Naive thymus-derived CD4-positive, alpha-beta T cell (primary cell): ENCODE measurements at regions of chr1 and their contacts with region 1.

Region 1: DNA sequence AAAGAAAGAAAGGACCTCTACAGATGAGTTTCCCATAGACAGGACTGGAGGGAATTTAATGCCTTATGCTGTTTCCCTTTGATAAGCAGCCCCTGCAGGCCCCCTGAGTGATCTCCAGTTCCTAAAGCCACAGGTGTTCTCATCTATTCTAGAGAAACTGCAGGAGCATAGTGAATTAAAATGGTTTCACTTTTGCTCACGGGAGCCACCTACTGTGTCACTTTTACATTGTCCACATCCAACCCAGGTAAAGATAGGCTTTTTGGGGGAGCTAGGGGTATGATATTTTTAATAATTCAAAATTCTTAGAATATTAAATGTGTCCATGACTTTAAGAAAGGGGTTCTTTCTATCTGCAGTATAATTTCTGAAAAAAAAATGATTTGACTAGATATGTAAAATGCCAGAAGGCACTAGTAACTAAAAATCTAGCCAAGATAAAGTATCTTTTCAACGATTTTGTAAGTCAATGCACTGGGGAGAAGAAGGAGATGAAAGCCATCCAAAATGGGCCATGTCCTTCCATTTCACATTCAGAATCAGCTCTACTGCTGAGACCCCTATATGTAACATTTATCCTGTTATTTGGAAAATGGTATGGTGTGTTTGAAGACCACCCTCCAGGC is 267.3 kb upstream of the DUSP10 start:
- DNase-seq: peak in 6 of 9 donors; percentile 1 to 36 (median 27)
- ATAC-seq: peak; percentile 67
- H3K4me3 ChIP-seq: no peak overlapping the region
- H3K4me3 Mint-ChIP-seq: peak overlapping the region in 5 of 10 donors; percentile 6 to 53 (median 31)
- H3K27ac ChIP-seq: no peak overlapping the region
- H3K27ac Mint-ChIP-seq: peak overlapping the region in 1 of 9 donors; percentile 31
- H3K4me1 ChIP-seq: no peaks in the 10 kb centered on the region
- H3K4me1 Mint-ChIP-seq: peaks cover 0 to 4% (median 0%) of the 10 kb centered on the region in 7 donors
- H3K27me3 ChIP-seq: no peaks in the 10 kb centered on the region
- H3K27me3 Mint-ChIP-seq: peaks cover 0 to 25% (median 0%) of the 10 kb centered on the region in 5 donors

Region 2: GRCh38 chr1:220810179-220810653 is 1199.0 kb before region 1 on chr1:
- CTCF ChIA-PET with region 1: no interaction called
- POLR2A ChIA-PET with region 1: no interaction called
- intact Hi-C with region 1: loop called in 1 of 2 experiments (anchors 2 kb)
- DNase-seq: peak; percentile 48 to 71 (median 59)
- ATAC-seq: peak; percentile 97
- H3K4me3 ChIP-seq: no peak overlapping the region
- H3K4me3 Mint-ChIP-seq: peak overlapping the region; percentile 33 to 86 (median 75)
- H3K27ac ChIP-seq: no peak overlapping the region
- H3K27ac Mint-ChIP-seq: peak overlapping the region in 1 of 9 donors; percentile 25
- H3K4me1 ChIP-seq: no peaks in the 10 kb centered on the region
- H3K4me1 Mint-ChIP-seq: peaks cover 0 to 9% (median 7%) of the 10 kb centered on the region in 7 donors
- H3K27me3 ChIP-seq: no peaks in the 10 kb centered on the region
- H3K27me3 Mint-ChIP-seq: peaks cover 5 to 33% (median 26%) of the 10 kb centered on the region in 5 donors

Region 3: DNA sequence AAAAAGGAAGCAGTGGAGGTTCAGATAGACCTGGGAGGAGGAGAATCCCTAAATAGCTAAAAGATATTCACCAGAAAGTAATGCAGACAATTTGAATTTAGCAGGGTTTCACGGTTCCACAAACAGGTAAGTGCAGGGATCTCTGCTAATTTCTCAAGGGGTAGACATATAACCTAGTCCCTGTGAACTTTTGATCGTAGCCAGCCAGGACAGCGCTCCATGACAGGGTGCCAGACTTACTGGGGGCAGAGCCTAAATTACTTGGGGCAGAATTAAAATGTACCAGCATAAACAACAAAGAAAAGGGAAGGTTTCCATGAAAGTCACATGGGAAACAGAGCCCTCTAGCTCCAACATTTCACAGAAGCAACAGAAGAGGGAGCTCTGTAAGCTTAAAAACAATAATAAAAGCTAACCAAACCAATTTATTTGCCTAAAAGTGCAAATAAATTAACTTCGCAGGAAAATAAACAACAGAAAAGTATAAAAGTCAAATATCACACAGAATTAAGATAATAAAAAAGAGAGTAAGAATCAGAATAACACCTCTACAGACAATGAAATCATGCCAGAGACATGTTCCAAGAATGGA is 465.6 kb before region 1 on chr1:
- CTCF ChIA-PET with region 1: no interaction called
- POLR2A ChIA-PET with region 1: no interaction called
- intact Hi-C with region 1: loop called (anchors 1 to 2 kb)
- DNase-seq: peak in 1 of 9 donors; percentile 4
- ATAC-seq: no peak
- H3K4me3 ChIP-seq: no peak overlapping the region
- H3K4me3 Mint-ChIP-seq: no peak overlapping the region
- H3K27ac ChIP-seq: no peak overlapping the region
- H3K27ac Mint-ChIP-seq: peak overlapping the region in 1 of 9 donors; percentile 21
- H3K4me1 ChIP-seq: no peaks in the 10 kb centered on the region
- H3K4me1 Mint-ChIP-seq: peaks cover 0 to 3% (median 0%) of the 10 kb centered on the region in 7 donors
- H3K27me3 ChIP-seq: no peaks in the 10 kb centered on the region
- H3K27me3 Mint-ChIP-seq: peaks cover 5 to 27% (median 13%) of the 10 kb centered on the region in 5 donors

Region 4: DNA sequence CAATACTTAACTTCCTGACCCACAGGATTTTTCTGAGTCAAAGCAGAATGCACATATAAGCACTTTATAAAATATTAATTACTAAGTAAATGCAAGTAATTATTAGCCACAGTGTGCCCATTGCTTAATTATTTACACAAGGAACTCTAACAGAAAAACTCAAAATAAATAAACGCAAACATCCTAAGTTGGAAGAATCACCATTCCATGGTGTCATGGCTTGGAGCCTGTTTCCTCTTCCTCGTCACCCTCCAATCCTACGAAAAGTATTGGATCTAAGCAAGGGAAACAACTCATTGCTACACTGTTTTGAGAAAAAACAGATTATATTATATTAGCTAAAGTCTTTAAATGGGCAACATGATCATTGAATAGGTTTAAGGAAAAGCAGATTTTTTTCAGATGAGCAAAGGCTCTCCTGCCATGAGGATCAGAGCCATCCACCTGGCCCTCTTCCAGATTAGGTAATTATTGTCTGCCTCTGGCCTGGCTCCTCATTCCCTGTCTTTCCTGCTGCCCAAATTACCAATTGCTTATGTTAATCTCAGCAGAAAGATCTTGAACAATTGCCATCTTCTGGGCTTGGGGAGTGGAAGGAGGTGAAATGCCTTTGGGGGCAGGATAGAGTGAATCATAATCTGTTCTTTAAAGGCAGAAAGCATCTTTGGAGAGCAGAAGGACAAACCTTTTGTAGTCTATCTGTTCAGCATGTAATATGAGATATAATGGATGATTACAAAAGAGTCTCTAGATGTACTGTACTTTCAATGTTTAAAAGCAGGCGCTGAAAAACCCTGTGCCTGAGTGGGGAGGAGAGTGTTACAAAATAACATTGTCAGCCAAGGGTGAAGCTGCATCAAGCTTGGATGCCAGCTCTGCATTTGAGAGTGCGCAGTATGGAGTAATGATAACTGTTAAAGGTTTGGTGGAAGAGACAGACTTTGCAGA is 388.5 kb before region 1 on chr1:
- CTCF ChIA-PET with region 1: no interaction called
- POLR2A ChIA-PET with region 1: no interaction called
- intact Hi-C with region 1: loop called in 1 of 2 experiments (anchors 10 kb)
- DNase-seq: no peak
- ATAC-seq: no peak
- H3K4me3 ChIP-seq: no peak overlapping the region
- H3K4me3 Mint-ChIP-seq: no peak overlapping the region
- H3K27ac ChIP-seq: no peak overlapping the region
- H3K27ac Mint-ChIP-seq: no peak overlapping the region
- H3K4me1 ChIP-seq: no peaks in the 10 kb centered on the region
- H3K4me1 Mint-ChIP-seq: no peaks in the 10 kb centered on the region
- H3K27me3 ChIP-seq: no peaks in the 10 kb centered on the region
- H3K27me3 Mint-ChIP-seq: peaks cover 0 to 27% (median 0%) of the 10 kb centered on the region in 5 donors

Region 5: DNA sequence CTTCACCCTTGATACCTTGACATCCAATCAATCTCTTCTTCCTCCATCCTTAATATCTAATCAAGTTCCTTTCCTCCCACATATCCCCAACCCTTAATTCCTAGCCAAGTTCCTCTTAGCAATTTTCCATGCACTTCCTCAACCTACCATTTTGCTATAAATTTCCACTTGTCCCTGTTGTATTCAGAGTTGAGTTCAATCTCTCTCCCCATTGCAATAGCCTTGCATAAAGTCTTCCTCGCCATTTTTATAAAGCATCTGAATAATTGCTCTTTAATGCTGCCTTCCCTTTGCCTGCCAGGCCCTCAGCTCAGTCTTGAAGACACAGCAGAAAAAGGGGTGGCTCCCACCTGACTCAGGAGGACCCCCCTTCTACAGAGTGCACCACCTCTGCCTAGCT is 148.4 kb after region 1 on chr1:
- CTCF ChIA-PET with region 1: no interaction called
- POLR2A ChIA-PET with region 1: no interaction called
- intact Hi-C with region 1: no loop called
- DNase-seq: no peak
- ATAC-seq: no peak
- H3K4me3 ChIP-seq: no peak overlapping the region
- H3K4me3 Mint-ChIP-seq: peak overlapping the region in 1 of 10 donors; percentile 37
- H3K27ac ChIP-seq: no peak overlapping the region
- H3K27ac Mint-ChIP-seq: no peak overlapping the region
- H3K4me1 ChIP-seq: no peaks in the 10 kb centered on the region
- H3K4me1 Mint-ChIP-seq: no peaks in the 10 kb centered on the region
- H3K27me3 ChIP-seq: no peaks in the 10 kb centered on the region
- H3K27me3 Mint-ChIP-seq: no peaks in the 10 kb centered on the region

Region 6: DNA sequence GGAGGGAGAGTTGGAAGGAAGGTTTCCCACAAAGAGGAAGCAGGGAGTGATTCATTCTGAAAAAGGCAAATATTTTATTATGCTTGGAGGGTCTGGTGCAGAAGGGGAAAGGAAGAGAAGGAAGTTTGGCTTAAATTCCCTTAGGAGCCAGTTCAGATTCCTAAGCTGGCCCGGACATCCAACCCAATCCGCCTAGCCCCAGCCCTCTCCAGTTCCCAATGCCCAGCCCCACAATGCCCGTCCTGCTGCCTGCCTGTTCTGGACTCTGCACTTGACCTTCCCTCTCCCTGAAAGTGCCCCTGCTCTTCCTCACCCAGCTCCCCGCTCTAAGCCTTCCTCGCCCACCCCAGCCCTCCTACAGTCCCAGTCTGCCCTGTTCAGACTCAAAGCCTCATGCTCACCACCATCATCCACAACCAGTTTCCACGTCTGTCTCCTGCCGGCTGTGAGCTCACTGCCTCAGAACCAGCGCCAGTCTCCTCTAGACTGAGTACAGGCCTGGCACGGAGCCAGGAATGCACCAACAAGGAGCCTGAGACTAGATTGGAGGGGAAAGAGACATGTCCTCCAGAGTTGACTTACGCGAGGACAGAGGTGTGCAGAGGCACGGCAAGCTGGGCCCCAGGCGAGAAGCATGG is 1722.0 kb after region 1 on chr1:
- CTCF ChIA-PET with region 1: no interaction called
- POLR2A ChIA-PET with region 1: no interaction called
- intact Hi-C with region 1: no loop called
- DNase-seq: no peak
- ATAC-seq: no peak
- H3K4me3 ChIP-seq: no peak overlapping the region
- H3K4me3 Mint-ChIP-seq: no peak overlapping the region
- H3K27ac ChIP-seq: no peak overlapping the region
- H3K27ac Mint-ChIP-seq: peak overlapping the region in 8 of 9 donors; percentile 0 to 86 (median 54)
- H3K4me1 ChIP-seq: peaks cover 13 to 23% of the 10 kb centered on the region in 2 donors
- H3K4me1 Mint-ChIP-seq: peaks cover 25 to 68% (median 40%) of the 10 kb centered on the region in 7 donors
- H3K27me3 ChIP-seq: no peaks in the 10 kb centered on the region
- H3K27me3 Mint-ChIP-seq: no peaks in the 10 kb centered on the region